ENCODE measurements at regions of chr15 and their contacts with region 1.

Region 1: DNA sequence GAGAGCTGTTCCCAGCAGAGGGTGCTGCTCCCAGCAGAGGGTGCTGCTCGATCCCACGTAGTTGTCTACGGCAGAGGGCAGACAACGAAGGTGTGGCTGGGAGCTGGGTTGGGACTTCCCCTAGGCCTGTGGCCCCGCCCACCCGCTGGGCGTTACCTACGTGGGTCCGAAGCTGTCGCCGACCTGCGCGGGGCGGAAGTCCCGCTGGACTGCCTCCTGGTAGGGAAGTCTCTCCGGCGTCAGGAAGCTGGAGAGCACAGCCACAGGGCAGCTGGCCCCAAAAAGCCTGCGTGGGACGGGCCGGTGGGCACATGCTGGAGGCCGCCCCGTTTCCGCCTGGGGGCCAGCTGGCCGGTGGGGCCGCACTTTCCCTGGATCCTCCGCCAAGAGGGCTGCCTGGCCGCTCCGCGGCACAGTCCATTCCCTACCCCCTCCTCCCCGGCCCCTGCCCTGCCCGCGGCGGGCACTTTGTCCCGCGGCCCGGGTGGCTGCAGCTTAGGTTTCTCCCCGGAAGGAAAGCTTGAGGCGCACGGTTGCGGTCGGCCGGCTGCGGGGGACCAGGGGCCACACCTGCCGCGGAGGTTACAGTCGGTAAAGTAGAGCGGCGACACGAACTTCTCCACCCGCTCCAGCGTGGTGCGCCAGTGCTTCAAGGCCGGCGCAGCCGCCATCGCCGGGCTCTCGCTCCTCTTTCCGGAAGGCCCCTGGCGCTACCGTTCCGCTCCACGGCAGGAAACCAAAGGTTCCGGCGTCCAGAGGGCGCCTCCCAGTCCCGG is at the start of gene MAN2C1:
- DNase-seq: peak; percentile 86 to 92 (median 87)
- H3K4me3 ChIP-seq: peak within 1 kb of the TSS; percentile 86 to 95
- H3K4me3 Mint-ChIP-seq: peak within 1 kb of the TSS; percentile 89 to 95 (median 92)
- H3K27ac ChIP-seq: peak within 1 kb of the TSS; percentile 93
- H3K27ac Mint-ChIP-seq: peak within 1 kb of the TSS; percentile 95 to 97 (median 96)
- H3K4me1 ChIP-seq: peaks cover 25% of the 10 kb centered on the region
- H3K4me1 Mint-ChIP-seq: peaks cover 7 to 37% (median 24%) of the 10 kb centered on the region in 4 donors
- H3K27me3 ChIP-seq: no peaks in the 10 kb centered on the region
- H3K27me3 Mint-ChIP-seq: no peaks in the 10 kb centered on the region
- total RNA-seq, gene MAN2C1: 448 to 449 TPM

Region 2: DNA sequence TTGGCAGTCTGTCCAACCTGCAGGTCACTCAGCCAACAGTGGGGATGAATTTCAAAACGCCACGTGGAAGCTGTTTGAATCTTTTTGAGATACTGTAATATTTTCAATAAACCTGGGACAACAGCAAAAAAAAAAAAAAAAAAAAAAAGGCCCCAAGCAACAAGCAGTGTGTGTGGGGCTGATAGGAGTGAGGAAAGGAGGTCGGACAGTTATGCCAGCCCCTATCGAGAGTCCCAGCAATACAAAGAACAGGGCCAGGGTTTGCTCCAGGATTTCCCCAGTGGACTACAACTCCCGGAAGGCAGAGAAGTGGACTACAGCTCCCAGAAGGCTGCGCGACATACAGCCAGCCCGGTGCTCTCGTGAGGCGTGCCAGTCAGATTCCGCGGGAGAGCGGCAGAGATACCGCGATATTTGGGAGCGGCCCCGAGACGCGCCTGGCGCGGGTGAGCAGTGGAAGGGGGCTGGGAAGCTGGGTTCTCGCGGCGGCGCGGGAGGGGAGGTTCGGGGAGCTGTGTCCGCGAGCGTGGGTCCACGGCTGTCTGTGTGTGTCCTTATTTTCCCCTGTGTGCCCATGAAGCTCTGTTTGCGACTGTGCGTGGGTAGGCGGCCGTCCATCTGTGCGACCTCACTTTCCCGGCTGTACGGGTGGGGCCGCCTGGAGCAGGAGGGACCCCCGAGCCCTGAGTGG is 344.8 kb before region 1 on chr15 and contains the start of gene PPCDC:
- CTCF ChIA-PET with region 1: no interaction called
- POLR2A ChIA-PET with region 1: interaction called, 12 read pairs
- intact Hi-C with region 1: loop called (anchors 10 kb)
- DNase-seq: peak; percentile 91 to 94 (median 92)
- H3K4me3 ChIP-seq: peak within 1 kb of the TSS; percentile 95 to 100
- H3K4me3 Mint-ChIP-seq: peak within 1 kb of the TSS; percentile 92 to 99 (median 96)
- H3K27ac ChIP-seq: peak within 1 kb of the TSS; percentile 76
- H3K27ac Mint-ChIP-seq: peak within 1 kb of the TSS; percentile 71 to 97 (median 93)
- H3K4me1 ChIP-seq: peaks cover 20% of the 10 kb centered on the region
- H3K4me1 Mint-ChIP-seq: peaks cover 11 to 28% (median 18%) of the 10 kb centered on the region in 4 donors
- H3K27me3 ChIP-seq: no peaks in the 10 kb centered on the region
- H3K27me3 Mint-ChIP-seq: no peaks in the 10 kb centered on the region
- total RNA-seq, gene PPCDC: 14.1 to 15.2 TPM

Region 3: DNA sequence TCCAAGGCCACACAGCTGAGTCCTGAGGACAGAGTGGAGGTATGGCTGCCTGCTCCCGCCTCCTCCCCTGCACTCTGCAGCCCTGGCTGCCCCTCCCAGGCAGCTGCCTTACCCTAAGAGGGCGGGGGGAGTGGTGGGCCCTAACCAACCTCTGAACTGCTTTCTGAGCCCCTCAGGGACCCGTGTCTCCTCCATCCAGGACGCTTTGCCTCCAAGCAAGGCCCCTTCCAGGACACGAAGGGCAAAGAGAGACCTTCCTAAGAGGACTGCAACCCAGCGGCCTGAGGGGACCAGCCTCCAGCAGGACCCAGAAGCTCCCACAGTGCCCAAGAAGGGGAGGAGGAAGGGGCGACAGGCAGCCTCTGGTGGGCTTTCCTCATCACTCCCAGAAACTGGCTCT is 13.6 kb before region 1 on chr15:
- CTCF ChIA-PET with region 1: interaction called, 17 read pairs
- POLR2A ChIA-PET with region 1: interaction called, 148 read pairs
- intact Hi-C with region 1: loop called (anchors 1 kb)
- DNase-seq: no peak
- H3K4me3 ChIP-seq: no peak overlapping the region
- H3K4me3 Mint-ChIP-seq: no peak overlapping the region
- H3K27ac ChIP-seq: no peak overlapping the region
- H3K27ac Mint-ChIP-seq: peak overlapping the region in 2 of 7 donors; percentile 42 to 53
- H3K4me1 ChIP-seq: peaks cover 15% of the 10 kb centered on the region
- H3K4me1 Mint-ChIP-seq: peaks cover 8 to 19% (median 12%) of the 10 kb centered on the region in 4 donors
- H3K27me3 ChIP-seq: no peaks in the 10 kb centered on the region
- H3K27me3 Mint-ChIP-seq: no peaks in the 10 kb centered on the region

Region 4: DNA sequence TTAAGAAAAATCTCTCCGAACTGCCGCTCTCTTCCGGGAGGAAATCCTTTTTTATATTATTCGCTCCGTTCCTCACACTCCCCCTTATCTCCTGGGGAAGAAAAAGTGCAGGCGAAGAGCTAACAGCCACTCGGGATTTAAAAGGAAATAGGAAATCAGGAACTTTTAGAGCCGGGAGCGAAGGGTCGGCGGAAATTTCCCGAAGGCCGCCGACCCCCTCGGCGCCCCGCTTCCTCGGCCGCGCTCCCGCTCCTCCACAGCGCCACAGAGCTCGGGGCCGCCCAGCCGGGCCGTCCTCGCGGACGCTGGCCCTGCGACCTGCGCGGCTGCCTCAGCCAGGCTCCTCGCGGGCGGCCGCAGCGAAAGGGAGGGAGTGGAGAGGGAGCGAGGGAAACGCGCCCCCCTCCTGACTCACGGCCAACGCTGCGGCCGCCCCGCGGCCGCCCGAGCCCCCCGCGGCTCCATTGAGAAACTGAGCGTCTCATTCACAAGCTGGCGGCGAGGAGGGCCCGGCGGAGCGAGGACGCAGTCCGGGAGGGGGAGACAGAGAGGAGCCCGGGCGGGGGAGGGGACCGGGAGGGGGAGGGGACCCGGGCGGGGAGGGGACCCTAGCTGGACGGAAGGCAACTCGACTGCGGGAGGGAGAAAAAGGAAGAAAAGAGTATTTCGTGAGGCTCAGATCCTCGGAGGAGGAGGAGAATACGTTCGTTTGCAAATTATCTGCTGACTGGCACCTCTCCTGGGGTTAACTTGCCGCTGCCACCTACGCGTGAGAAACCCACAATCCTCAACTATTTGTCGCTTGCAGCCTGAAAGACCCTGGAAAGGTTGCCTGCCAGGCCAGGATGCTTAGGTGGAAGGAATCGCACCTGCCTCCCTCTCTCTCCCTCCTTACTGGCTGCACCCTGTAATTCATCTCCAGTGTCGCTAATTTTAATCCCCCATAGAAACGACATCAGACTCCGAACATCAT is 211.1 kb after region 1 on chr15 and contains the start of gene PTPN9:
- CTCF ChIA-PET with region 1: interaction called, 4 read pairs
- POLR2A ChIA-PET with region 1: interaction called, 24 read pairs
- intact Hi-C with region 1: no loop called
- DNase-seq: peak; percentile 52 to 73 (median 63)
- H3K4me3 ChIP-seq: peak within 1 kb of the TSS; percentile 61 to 74
- H3K4me3 Mint-ChIP-seq: peak within 1 kb of the TSS; percentile 93 to 97 (median 94)
- H3K27ac ChIP-seq: peak within 1 kb of the TSS; percentile 77
- H3K27ac Mint-ChIP-seq: peak within 1 kb of the TSS; percentile 90 to 95 (median 94)
- H3K4me1 ChIP-seq: peaks cover 22% of the 10 kb centered on the region
- H3K4me1 Mint-ChIP-seq: peaks cover 18 to 26% (median 21%) of the 10 kb centered on the region in 4 donors
- H3K27me3 ChIP-seq: no peaks in the 10 kb centered on the region
- H3K27me3 Mint-ChIP-seq: no peaks in the 10 kb centered on the region
- total RNA-seq, gene PTPN9: 15.9 to 16.6 TPM

Region 5: GRCh38 chr15:75639709-75640482 is 271.8 kb after region 1 on chr15 and contains the start of gene IMP3:
- CTCF ChIA-PET with region 1: interaction called, 69 read pairs
- POLR2A ChIA-PET with region 1: interaction called, 110 read pairs
- intact Hi-C with region 1: loop called (anchors 1 kb)
- DNase-seq: peak; percentile 92 to 96 (median 94)
- H3K4me3 ChIP-seq: peak within 1 kb of the TSS; percentile 77 to 96
- H3K4me3 Mint-ChIP-seq: peak within 1 kb of the TSS; percentile 87 to 98 (median 94)
- H3K27ac ChIP-seq: peak within 1 kb of the TSS; percentile 81
- H3K27ac Mint-ChIP-seq: peak within 1 kb of the TSS; percentile 79 to 98 (median 96)
- H3K4me1 ChIP-seq: peaks cover 40% of the 10 kb centered on the region
- H3K4me1 Mint-ChIP-seq: peaks cover 30 to 61% (median 39%) of the 10 kb centered on the region in 4 donors
- H3K27me3 ChIP-seq: no peaks in the 10 kb centered on the region
- H3K27me3 Mint-ChIP-seq: no peaks in the 10 kb centered on the region
- total RNA-seq, gene IMP3: 85.5 to 96.9 TPM